PC-3 (cell line): ENCODE measurements at regions of chr7 and their contacts with region 1.

Region 1: DNA sequence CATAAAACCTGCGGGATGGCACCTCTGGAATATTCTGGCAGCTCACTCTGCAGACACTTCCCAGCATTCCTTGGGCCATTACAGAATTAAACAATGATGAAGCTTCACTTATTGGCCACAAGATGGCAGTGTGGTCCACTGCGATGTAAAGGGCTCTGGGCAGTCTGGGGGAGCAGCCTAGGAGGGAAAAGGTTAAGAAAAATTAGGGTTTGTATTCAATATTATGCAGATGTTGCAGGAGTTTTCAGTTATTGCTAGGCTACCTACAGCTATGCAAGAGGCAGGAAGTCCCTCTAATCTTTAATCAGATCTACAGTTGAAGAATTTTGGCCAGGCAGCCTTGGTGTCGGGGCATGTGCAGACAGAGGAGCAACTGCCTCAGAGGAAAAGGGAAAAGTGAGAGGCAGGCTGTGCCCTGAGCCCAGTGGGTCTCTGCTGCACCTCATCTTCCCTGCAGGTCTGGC is 233.2 kb upstream of the PRSS1 start:
- DNase-seq: peak; percentile 78
- ATAC-seq: peak; percentile 81
- H3K4me3 ChIP-seq: no peak overlapping the region
- H3K27ac ChIP-seq: no peak overlapping the region
- H3K4me1 ChIP-seq: peaks cover 21% of the 10 kb centered on the region
- H3K27me3 ChIP-seq: no peaks in the 10 kb centered on the region
- CTCF ChIP-seq: peak; percentile 88

Region 2: GRCh38 chr7:141874787-141875186 is 641.3 kb before region 1 on chr7:
- CTCF ChIA-PET with region 1: no interaction called
- POLR2A ChIA-PET with region 1: no interaction called
- intact Hi-C with region 1: no loop called
- DNase-seq: no peak
- ATAC-seq: no peak
- H3K4me3 ChIP-seq: no peak overlapping the region
- H3K27ac ChIP-seq: no peak overlapping the region
- H3K4me1 ChIP-seq: no peaks in the 10 kb centered on the region
- H3K27me3 ChIP-seq: peaks cover 24% of the 10 kb centered on the region
- CTCF ChIP-seq: no peak

Region 3: GRCh38 chr7:142496545-142497041 is 19.5 kb before region 1 on chr7:
- CTCF ChIA-PET with region 1: interaction called, 13 read pairs
- POLR2A ChIA-PET with region 1: no interaction called
- intact Hi-C with region 1: loop called (anchors 1 kb)
- DNase-seq: peak; percentile 73
- ATAC-seq: peak; percentile 74
- H3K4me3 ChIP-seq: peak overlapping the region; percentile 28; the same call in 1 of the 2 replicates
- H3K27ac ChIP-seq: no peak overlapping the region
- H3K4me1 ChIP-seq: peaks cover 9% of the 10 kb centered on the region; the same call in 1 of the 2 replicates
- H3K27me3 ChIP-seq: no peaks in the 10 kb centered on the region
- CTCF ChIP-seq: peak; percentile 86